SK-N-SH (cell line): ENCODE measurements at regions of chr10 and their contacts with region 1.

Region 1: DNA sequence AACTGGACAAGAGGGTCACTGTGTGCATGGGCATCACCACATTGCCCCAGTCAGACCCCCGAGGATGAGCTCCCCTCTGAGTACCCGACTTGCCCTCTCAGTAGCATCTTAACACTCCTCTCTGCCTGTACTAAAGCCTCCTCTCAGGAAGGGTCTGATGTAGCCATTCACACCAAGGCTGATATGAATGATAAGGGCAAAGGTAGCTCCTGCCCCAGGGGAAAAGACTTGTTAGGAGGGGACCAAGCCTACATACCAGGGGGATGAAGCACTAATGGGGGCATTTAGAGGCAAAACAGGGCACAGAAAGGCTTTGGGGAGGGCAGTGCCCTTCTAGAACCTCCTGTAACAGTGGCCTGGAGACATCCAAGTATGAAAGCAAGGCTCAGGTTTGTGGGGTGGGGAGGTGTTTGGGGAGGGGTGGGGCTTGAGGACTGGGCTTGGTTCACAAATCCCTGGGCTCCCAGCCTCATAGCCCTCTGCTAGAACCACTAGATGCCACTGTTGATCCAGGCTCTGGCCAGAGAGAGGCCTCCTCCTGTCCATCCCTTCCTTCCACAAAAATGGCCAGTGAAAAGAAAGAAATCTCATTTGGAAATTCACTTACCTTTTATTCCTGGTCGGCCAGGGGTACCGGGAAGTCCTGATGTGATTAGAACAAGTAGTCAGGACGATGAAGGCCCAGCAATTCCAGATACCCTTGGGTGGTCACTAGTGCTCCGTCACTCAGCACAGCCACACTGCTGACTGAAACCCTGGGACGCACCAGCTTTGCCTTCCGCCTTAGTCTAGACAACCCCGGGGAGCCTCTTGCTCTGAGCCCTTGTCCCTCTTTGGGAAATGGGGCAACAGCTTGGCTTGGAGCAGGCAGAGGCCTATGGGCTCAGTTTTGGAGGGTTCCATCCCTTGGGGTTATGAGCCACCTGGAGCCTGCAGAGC is 40.3 kb downstream of the COL17A1 start:
- DNase-seq: peak; percentile 74
- H3K4me3 ChIP-seq: no peak overlapping the region
- H3K27ac ChIP-seq: no peak overlapping the region
- H3K4me1 ChIP-seq: peaks cover 0 to 2% of the 10 kb centered on the region in 2 experiments; a peak in 1 of 4 replicates
- H3K27me3 ChIP-seq: no peaks in the 10 kb centered on the region
- CTCF ChIP-seq: peak; percentile 77
- EP300 ChIP-seq: no peak
- RAD21 ChIP-seq: peak; percentile 89

Region 2: DNA sequence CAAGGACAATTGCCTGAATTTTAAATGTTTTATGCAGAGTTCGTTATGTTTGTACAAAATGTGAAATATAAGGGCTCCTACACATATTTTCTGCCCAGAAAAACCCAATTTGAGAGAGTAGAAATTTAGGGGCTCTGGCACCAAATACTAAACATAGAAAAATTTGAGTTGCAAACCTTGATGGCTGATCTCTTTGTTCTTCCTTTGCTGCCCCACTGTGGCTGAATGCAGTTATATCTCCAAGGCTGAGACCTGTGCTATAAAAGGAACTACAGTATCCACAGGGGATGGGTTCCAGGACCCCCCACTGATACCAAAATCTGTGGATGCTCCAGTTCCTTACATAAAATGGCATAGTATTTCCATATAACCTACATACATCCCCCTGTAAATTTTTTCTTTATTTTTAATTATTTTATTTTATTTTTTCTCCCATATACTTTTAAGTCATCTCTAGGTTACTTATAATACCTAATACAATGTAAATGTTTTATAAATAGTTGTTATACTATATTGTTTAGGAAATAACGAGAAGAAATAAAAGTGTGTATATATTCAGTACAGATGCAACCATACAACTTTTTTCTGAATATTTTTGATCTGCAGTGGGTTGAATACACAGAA is 164.3 kb after region 1 on chr10:
- CTCF ChIA-PET with region 1: interaction called, 10 read pairs
- POLR2A ChIA-PET with region 1: no interaction called
- DNase-seq: peak; percentile 67
- H3K4me3 ChIP-seq: no peak overlapping the region; a peak in 1 of 4 replicates
- H3K27ac ChIP-seq: no peak overlapping the region
- H3K4me1 ChIP-seq: no peaks in the 10 kb centered on the region; a peak in 1 of 4 replicates
- H3K27me3 ChIP-seq: no peaks in the 10 kb centered on the region; the same call in 1 of the 2 replicates
- CTCF ChIP-seq: peak; percentile 67
- EP300 ChIP-seq: no peak
- RAD21 ChIP-seq: peak; percentile 89

Region 3: DNA sequence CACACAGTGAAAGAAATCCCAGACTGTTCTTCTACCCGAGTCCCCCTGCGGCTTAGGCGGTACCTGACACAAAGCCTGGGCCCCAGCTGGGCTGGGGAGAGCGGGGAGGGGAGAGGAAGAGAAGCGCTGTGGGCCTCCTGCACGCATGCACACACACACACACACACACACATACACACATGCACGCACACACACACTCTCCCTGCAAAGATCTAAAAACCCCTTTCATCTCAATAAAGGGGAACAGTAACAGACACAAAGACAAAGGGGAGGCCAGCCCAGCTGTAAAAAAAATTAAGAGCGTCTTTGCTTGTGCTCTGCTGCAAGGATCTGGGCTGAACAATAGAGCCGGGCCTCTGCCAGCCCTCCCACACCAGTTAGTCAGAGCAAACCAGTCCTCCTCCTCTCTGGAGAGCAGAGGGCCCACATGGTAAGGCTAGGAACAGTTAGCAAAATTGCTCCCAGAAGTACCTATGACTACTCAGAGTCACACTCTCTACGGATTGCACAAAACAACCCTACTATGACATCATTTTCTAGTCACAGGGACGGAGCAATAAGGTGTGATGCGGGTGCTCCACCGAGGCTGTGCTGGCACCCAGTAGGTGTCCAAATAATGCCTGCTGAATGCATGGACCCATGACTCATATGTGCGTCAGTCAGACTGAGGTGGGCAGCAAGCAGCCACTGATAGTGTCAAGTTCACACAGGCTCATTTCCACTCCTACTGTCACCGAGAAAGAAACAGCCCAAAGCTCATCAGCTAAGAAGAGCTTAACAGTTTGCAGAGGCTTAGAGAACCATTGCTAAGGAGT is 283.7 kb after region 1 on chr10:
- CTCF ChIA-PET with region 1: no interaction called
- POLR2A ChIA-PET with region 1: no interaction called
- DNase-seq: no peak
- H3K4me3 ChIP-seq: peak overlapping the region; percentile 0 to 45; a peak in 3 of 4 replicates
- H3K27ac ChIP-seq: peak overlapping the region; percentile 80 to 96
- H3K4me1 ChIP-seq: peaks cover 48 to 63% of the 10 kb centered on the region in 2 experiments
- H3K27me3 ChIP-seq: no peaks in the 10 kb centered on the region
- CTCF ChIP-seq: no peak
- EP300 ChIP-seq: peak in 1 of 2 experiments; percentile 29; a peak in 1 of 4 replicates
- RAD21 ChIP-seq: no peak